IMR-90 (cell line): ENCODE measurements at regions of chr2 and their contacts with region 1.

Region 1: DNA sequence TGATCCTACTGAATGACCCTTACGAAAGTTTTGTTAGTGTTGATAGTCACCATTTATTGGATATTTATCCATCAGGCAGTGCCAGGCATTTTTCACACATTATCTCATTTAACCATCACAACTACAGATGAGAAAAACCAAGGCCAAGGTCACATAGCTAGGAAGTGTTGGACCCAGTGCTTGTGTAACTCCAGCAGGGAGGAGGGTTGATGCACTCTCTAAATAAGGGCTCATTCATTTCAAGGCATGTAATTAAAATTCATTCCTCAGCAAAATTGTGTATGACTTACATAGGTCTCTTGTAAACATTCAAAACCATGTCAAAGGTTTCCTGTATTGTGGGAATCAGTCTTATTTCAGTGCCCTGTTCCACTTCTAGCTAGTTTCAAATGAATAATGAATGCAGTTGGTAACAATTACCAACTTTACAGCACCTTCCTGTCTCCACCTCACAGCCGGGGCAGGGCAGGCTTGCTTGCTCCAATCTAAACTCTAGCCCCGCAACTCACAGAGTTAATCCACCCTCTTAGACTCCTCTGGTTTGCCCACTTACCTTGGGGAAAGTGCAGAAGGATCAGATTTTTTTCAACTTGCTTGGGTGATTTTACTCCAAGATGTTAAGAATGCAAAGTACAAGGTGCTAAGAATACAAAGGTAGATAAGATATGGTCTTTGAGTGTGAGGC is 5.8 kb upstream of the MAPRE3 start:
- DNase-seq: no peak
- ATAC-seq: no peak
- H3K4me3 ChIP-seq: no peak overlapping the region
- H3K27ac ChIP-seq: no peak overlapping the region
- H3K4me1 ChIP-seq: 0 out of 2 replicates have a peak, but pooled peaks cover 2% of the 10 kb centered on the region
- H3K27me3 ChIP-seq: peaks cover 14% of the 10 kb centered on the region
- CTCF ChIP-seq: no peak
- POLR2A ChIP-seq: no peak
- RAD21 ChIP-seq: no peak

Region 2: GRCh38 chr2:27185331-27186026 is 220.9 kb after region 1 on chr2:
- CTCF ChIA-PET with region 1: no interaction called
- POLR2A ChIA-PET with region 1: no interaction called
- dilution Hi-C with region 1: no loop called
- in situ Hi-C with region 1: no loop called
- intact Hi-C with region 1: loop called (anchors 5 kb)
- DNase-seq: peak; percentile 80
- ATAC-seq: peak; percentile 67
- H3K4me3 ChIP-seq: no peak overlapping the region
- H3K27ac ChIP-seq: peak overlapping the region; percentile 86; the same call in 1 of the 2 replicates
- H3K4me1 ChIP-seq: peaks cover 18% of the 10 kb centered on the region
- H3K27me3 ChIP-seq: peaks cover 18% of the 10 kb centered on the region
- CTCF ChIP-seq: no peak
- POLR2A ChIP-seq: no peak
- RAD21 ChIP-seq: no peak

Region 3: DNA sequence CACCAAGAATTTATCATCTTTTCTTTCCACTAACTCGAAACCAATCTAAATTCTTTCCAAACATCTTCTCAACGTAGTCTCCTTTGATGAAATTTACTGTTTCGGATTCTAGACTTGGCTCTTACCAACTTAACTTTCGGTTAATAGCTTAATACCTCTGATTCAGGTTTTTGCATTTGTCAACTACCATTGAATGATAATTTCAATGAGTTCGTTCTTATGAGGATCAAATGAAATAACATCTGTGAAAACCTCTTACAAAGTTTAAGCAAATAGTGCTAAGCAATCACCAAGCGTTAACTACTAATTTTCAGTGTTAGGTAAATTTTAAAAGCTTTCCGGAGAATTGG is 463.2 kb after region 1 on chr2:
- CTCF ChIA-PET with region 1: no interaction called
- POLR2A ChIA-PET with region 1: no interaction called
- dilution Hi-C with region 1: no loop called
- in situ Hi-C with region 1: no loop called
- intact Hi-C with region 1: no loop called
- DNase-seq: no peak
- ATAC-seq: no peak
- H3K4me3 ChIP-seq: peak overlapping the region; percentile 81
- H3K27ac ChIP-seq: peak overlapping the region; percentile 94
- H3K4me1 ChIP-seq: peaks cover 8% of the 10 kb centered on the region
- H3K27me3 ChIP-seq: no peaks in the 10 kb centered on the region
- CTCF ChIP-seq: no peak
- POLR2A ChIP-seq: no peak
- RAD21 ChIP-seq: no peak